Sciatic nerve (tissue), 2 donors: ENCODE measurements at regions of chr17 and their contacts with region 1.

Region 1: DNA sequence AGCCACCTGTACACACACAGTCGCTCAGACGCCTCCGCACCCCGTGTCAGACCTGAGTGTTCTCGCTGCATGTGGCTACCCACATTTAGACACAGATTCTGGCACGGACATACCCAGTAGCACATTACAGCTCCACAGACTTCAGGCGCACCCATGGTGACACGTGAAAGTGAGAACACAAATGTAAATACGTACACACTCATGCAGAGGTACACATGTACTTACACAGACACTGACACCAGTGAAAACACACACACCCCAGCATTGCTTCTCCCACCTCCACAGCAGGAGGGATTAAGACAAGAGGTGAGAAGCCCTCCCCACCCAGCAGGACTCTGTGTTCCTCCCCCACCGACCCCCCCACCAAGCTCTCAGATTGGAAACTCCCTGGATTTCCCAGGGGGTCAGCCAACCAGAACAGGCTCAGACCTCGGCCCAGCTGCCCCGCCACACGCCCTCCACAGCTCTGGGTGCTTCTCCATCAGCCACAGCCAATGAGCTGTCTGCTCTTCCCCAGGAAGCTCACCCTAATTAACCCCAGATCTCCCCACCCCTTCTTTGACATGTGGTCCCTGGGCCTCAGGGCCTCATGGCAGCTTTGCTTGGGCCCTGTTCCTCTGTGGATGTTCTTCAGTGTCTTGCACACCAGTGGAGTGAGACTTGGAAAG is 5.3 kb upstream of the FOXN1 start:
- DNase-seq: no peak
- ATAC-seq: no peak

Region 2: GRCh38 chr17:28612936-28613872 is 112.4 kb after region 1 on chr17:
- intact Hi-C with region 1: loop called (anchors 10 kb)
- DNase-seq: no peak
- ATAC-seq: peak; percentile 56